Astrocyte of the cerebellum (primary cell): ENCODE measurements at regions of chr5 and their contacts with region 1.

Region 1: DNA sequence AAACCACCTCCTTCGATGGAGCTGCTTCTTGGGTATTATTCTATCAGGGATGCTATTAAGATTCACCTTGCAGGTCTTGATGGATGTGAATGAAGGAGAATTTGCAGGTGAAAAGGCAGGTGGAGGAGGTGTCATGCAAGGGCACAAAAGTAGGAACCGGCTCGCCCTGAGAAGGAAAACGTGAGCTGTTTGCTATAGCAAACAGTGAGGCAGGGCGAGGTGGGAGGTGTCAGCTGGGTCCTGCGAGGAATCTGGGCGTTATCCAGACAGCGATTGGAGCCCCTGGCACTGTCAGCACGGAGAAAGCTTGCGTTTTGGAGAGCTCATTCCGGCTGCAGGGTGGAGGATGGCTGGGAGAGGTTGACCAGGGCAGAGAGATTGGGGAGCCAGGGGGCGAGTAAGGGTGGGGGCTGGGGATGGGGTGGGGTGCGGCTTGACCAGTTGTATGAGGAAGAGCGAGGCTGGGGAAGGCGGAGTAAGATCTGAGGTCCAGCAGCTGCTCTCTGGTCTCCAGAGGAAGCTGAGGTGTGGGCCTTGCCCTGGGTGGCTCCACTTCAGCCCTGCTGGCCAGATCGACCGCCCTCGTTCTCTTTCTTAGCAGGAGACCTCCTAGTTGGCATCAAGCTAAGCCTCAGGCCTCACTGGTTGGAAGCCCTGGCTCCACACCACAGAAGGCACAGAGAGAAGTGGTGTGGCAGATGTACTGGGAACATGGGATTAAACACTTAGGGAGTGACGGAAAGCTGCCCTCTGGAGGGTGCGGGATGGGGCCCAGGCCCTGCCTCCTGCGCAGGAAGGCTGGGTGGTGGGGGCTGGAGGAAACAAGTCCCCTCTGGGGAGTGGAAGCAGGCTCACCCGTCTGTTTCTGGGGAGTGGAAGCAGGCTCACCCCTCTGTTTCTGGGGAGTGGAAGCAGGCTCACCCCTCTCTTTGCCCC is 54.7 kb upstream of the NEURL1B start:
- DNase-seq: no peak
- H3K4me3 ChIP-seq: no peak overlapping the region
- CTCF ChIP-seq: no peak

Region 2: DNA sequence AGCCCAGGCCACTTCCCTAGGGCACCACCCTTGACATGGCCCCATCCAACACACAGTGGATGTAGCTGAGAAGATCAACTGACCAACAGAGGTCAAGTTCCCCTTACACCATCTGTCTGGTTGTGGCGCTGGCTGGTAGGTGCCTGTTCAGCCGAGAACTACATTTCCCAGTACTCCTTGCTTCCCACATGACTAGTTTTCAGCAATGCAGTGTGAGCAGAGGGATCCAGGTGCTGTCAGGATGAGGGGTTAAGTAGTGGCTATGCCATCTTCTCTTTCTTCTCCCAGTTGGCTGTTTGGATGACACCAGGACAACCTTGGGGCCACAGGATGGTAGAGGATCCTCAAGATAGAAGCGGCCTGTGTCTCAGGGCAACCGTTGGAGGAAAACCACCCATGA is 83.4 kb before region 1 on chr5:
- in situ Hi-C with region 1: loop called (anchors 5 kb)
- DNase-seq: no peak
- H3K4me3 ChIP-seq: no peak overlapping the region
- CTCF ChIP-seq: no peak